ENCODE measurements at regions of chr20 and their contacts with region 1.

Region 1: GRCh38 chr20:58650776-58651558 is at the start of gene STX16:
- DNase-seq: peak; percentile 96
- H3K4me3 ChIP-seq: peak within 1 kb of the TSS; percentile 98 to 99
- H3K27ac ChIP-seq: peak within 1 kb of the TSS; percentile 93 to 97
- H3K4me1 ChIP-seq: peaks cover 13 to 35% of the 10 kb centered on the region in 2 experiments
- H3K27me3 ChIP-seq: no peaks in the 10 kb centered on the region
- CTCF ChIP-seq: peak; percentile 68
- EP300 ChIP-seq: peak in 1 of 2 experiments; percentile 50; a peak in 2 of 4 replicates
- RAD21 ChIP-seq: no peak; the same call in 1 of the 2 replicates
- polyA plus RNA-seq, gene STX16: 63.8 and 90.9 TPM in 2 replicates

Region 2: GRCh38 chr20:58236612-58237330 is 414.2 kb before region 1 on chr20:
- CTCF ChIA-PET with region 1: interaction called, 87 read pairs
- POLR2A ChIA-PET with region 1: interaction called, 4 read pairs
- DNase-seq: peak; percentile 89
- H3K4me3 ChIP-seq: peak overlapping the region; percentile 40 to 67
- H3K27ac ChIP-seq: peak overlapping the region; percentile 74 to 92
- H3K4me1 ChIP-seq: peaks cover 12 to 15% of the 10 kb centered on the region in 2 experiments; a peak in 3 of 4 replicates
- H3K27me3 ChIP-seq: no peaks in the 10 kb centered on the region
- CTCF ChIP-seq: peak; percentile 97
- EP300 ChIP-seq: no peak
- RAD21 ChIP-seq: peak; percentile 90

Region 3: DNA sequence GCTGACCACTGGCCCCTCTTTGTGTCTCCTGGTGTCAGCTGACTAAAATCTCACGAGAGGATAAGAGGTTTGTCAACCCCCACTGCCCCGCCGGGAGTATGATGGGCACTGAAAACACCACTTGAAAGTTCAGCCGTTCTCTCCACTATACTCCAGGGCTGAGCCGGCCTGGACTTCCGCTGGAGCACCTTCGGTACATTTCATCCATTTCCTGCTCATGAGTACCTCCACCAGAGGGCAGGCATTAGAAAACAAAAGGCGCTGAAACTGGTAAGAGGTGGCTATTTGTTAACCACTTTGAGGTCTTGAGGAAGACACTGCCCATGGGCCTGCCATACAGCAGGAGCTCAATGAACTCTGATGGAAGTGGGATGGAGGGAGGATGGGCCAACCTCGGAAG is 404.6 kb before region 1 on chr20:
- CTCF ChIA-PET with region 1: interaction called, 20 read pairs
- POLR2A ChIA-PET with region 1: interaction called, 3 read pairs
- DNase-seq: no peak
- H3K4me3 ChIP-seq: no peak overlapping the region
- H3K27ac ChIP-seq: no peak overlapping the region
- H3K4me1 ChIP-seq: peaks cover 0 to 5% of the 10 kb centered on the region in 2 experiments; a peak in 1 of 4 replicates
- H3K27me3 ChIP-seq: no peaks in the 10 kb centered on the region
- CTCF ChIP-seq: peak; percentile 48
- EP300 ChIP-seq: no peak
- RAD21 ChIP-seq: peak; percentile 53

Region 4: DNA sequence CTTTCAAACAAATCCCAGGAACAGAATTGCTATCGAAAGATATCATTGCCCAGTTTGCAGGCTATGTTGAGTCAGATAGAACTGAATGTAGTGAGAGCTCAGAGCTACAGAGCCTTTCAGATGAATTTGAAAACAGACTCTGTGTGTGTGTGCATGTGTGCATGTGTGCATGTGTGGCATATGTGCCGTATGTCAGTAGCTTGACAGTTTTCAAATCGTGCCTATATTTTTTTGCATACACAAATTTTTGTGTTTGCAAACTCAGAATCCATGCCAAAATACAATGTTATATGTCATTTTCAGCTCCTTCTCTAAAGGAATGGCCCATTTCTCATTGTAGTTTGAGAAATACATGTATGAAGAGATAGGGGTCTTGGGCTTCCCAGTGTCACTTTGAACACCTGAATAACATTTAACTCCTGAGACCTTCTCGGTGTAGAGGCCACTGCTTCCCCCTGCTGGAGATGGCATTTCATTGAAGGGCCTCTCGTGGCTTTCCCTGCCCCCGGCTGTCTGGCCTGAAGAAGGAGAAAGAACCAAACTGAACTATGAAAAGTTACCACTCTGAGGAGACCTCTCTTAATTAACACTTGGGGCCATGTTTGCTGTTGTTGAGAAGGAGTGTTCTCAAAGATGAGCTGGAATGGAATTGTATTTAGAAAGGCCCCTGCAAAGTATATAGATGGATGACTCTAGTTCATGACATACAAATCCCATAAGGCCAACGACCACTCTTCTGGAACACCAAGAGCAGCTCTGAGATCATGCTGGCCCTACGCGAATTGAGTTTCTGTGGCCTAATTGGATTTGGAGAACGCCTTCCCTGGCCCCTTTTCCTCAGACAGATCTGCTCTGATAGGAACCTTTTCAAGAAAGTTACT is 203.2 kb before region 1 on chr20:
- CTCF ChIA-PET with region 1: interaction called, 14 read pairs
- POLR2A ChIA-PET with region 1: interaction called, 6 read pairs
- DNase-seq: no peak
- H3K4me3 ChIP-seq: no peak overlapping the region
- H3K27ac ChIP-seq: no peak overlapping the region; a peak in 1 of 4 replicates
- H3K4me1 ChIP-seq: peaks cover 4 to 42% of the 10 kb centered on the region in 2 experiments; a peak in 3 of 4 replicates
- H3K27me3 ChIP-seq: no peaks in the 10 kb centered on the region
- CTCF ChIP-seq: peak; percentile 74
- EP300 ChIP-seq: no peak
- RAD21 ChIP-seq: peak; percentile 77

Region 5: GRCh38 chr20:58839474-58839874 is 188.5 kb after region 1 on chr20:
- CTCF ChIA-PET with region 1: interaction called, 46 read pairs
- POLR2A ChIA-PET with region 1: interaction called, 4 read pairs
- DNase-seq: peak; percentile 85
- H3K4me3 ChIP-seq: peak overlapping the region; percentile 42 to 59
- H3K27ac ChIP-seq: no peak overlapping the region
- H3K4me1 ChIP-seq: no peaks in the 10 kb centered on the region; a peak in 1 of 4 replicates
- H3K27me3 ChIP-seq: peaks cover 9% of the 10 kb centered on the region; the same call in 1 of the 2 replicates
- CTCF ChIP-seq: peak; percentile 62
- EP300 ChIP-seq: no peak
- RAD21 ChIP-seq: peak; percentile 66

Region 6: GRCh38 chr20:58852548-58853271 is 201.7 kb after region 1 on chr20 and contains the start of gene GNAS:
- CTCF ChIA-PET with region 1: interaction called, 14 read pairs
- POLR2A ChIA-PET with region 1: no interaction called
- DNase-seq: peak; percentile 74
- H3K4me3 ChIP-seq: peak within 1 kb of the TSS; percentile 37 to 47; a peak in 2 of 4 replicates
- H3K27ac ChIP-seq: no peak within 1 kb of the TSS
- H3K4me1 ChIP-seq: peaks cover 0 to 23% of the 10 kb centered on the region in 2 experiments; a peak in 1 of 4 replicates
- H3K27me3 ChIP-seq: peaks cover 4% of the 10 kb centered on the region; the same call in 1 of the 2 replicates
- CTCF ChIP-seq: peak; percentile 59
- EP300 ChIP-seq: no peak
- RAD21 ChIP-seq: peak; percentile 47
- polyA plus RNA-seq, gene GNAS: 1,011 and 1,562 TPM in 2 replicates